Body of pancreas (tissue), 4 donors: ENCODE measurements at regions of chr6 and their contacts with region 1.

Region 1: GRCh38 chr6:44172731-44173500 is 14.3 kb downstream of the CAPN11 start:
- DNase-seq: peak; percentile 86 to 90 (median 88)
- ATAC-seq: peak; percentile 94
- H3K4me3 ChIP-seq: no peak overlapping the region
- H3K27ac ChIP-seq: no peak overlapping the region
- H3K4me1 ChIP-seq: peaks cover 4% of the 10 kb centered on the region
- H3K27me3 ChIP-seq: no peaks in the 10 kb centered on the region
- CTCF ChIP-seq: peak; percentile 58 to 95 (median 90)
- POLR2A ChIP-seq: no peak

Region 2: GRCh38 chr6:43391440-43392031 is 781.4 kb before region 1 on chr6:
- intact Hi-C with region 1: no loop called
- DNase-seq: no peak
- ATAC-seq: no peak
- H3K4me3 ChIP-seq: no peak overlapping the region
- H3K27ac ChIP-seq: no peak overlapping the region
- H3K4me1 ChIP-seq: peaks cover 8% of the 10 kb centered on the region
- H3K27me3 ChIP-seq: no peaks in the 10 kb centered on the region
- CTCF ChIP-seq: no peak
- POLR2A ChIP-seq: no peak

Region 3: DNA sequence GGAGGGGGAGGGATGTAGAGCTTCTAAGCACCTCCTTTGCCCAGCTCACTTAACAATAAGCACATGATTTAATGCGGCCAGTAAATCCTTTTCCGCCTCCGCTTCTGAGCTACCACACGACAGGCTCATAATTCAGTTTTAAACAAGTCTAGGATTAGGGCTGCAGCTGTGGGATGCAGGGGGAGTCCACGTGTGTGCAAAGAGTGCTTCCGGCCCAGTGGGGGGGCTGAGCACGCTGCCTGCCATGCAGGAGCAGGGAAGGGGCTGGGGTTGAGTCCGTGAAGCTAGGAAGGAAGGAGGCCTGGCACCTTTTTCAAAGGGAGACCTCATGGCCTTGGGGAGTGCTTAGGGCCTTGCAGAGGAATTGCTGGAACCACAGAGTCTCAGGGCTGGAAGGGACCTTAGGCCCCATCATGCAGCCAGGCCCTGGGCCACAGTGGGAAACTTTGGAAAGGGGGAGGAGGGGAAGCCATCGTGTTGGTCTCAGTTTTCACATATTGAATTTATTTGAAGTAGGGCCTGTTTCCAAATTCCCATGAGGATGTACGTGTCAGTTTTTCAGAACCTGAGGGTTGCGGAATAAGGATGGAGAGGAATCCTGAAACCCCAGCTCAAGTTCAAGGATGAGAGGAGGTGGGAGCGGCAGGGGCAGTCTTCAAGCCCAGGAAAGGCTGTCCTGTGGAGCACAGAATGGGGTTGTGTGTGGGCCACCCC is 306.8 kb before region 1 on chr6:
- intact Hi-C with region 1: no loop called
- DNase-seq: no peak
- ATAC-seq: no peak
- H3K4me3 ChIP-seq: no peak overlapping the region
- H3K27ac ChIP-seq: no peak overlapping the region
- H3K4me1 ChIP-seq: peaks cover 13% of the 10 kb centered on the region
- H3K27me3 ChIP-seq: no peaks in the 10 kb centered on the region
- CTCF ChIP-seq: no peak
- POLR2A ChIP-seq: no peak

Region 4: GRCh38 chr6:44234101-44235025 is 61.4 kb after region 1 on chr6:
- intact Hi-C with region 1: loop called (anchors 5 kb)
- DNase-seq: peak; percentile 59 to 76 (median 74)
- ATAC-seq: no peak
- H3K4me3 ChIP-seq: no peak overlapping the region
- H3K27ac ChIP-seq: peak overlapping the region; percentile 22 to 99 (median 64)
- H3K4me1 ChIP-seq: peaks cover 56% of the 10 kb centered on the region
- H3K27me3 ChIP-seq: no peaks in the 10 kb centered on the region
- CTCF ChIP-seq: peak; percentile 25 to 70 (median 51)
- POLR2A ChIP-seq: no peak